ENCODE measurements at regions of chr6 and their contacts with region 1.

Region 1: GRCh38 chr6:35240840-35241801 is 18.4 kb upstream of the ZNF76 start:
- DNase-seq: peak; percentile 88
- H3K4me3 Mint-ChIP-seq: no peak overlapping the region
- H3K27ac Mint-ChIP-seq: no peak overlapping the region
- H3K4me1 Mint-ChIP-seq: no peaks in the 10 kb centered on the region
- H3K27me3 Mint-ChIP-seq: no peaks in the 10 kb centered on the region

Region 2: DNA sequence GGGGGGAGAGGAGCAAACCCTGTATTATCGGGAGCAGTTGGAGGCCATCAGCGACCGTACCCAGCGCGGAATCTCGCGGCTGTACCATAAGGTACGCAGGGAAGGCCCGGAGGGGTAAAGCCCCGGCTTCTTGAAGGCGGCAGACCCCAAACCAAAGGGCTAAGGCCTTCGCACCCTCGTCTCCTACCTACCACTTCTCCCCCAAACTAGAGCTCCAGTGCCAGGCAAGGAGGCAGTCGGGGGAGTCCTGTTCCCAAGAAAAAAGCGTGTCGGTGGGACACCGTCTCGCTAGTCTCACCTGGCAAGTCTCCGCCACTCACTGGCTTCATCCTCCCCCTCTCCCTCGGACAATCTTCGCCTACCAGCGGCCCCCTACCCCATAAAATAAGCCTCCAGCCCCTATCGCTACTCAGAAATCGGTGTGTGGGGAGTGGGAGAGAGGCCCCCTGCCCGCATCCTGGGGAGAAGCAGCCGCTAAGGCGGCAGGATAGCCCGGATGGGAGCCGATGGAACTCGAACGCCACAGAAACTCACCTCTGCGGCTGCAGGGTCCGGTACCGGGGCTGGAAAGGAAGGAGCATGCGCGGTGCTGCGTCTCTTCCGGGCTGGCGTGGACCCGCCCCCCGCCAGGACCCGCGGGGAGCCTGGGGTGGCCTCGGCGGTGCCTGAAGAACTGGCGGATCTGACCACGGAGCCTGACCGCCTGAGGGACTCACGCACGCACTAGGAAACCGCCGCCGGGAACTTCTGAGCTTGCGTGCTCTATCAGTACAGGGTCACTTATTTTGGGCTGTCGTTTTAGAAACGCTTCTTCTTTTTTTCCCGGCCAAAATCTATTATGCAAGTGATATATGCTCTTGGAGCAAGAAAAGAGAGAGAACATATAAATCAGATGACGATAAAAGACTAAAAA is 815.4 kb before region 1 on chr6 and contains the start of gene RPS10:
- CTCF ChIA-PET with region 1: no interaction called
- intact Hi-C with region 1: no loop called
- DNase-seq: peak; percentile 93
- H3K4me3 Mint-ChIP-seq: peak within 1 kb of the TSS; percentile 98
- H3K27ac Mint-ChIP-seq: peak within 1 kb of the TSS; percentile 98
- H3K4me1 Mint-ChIP-seq: peaks cover 38% of the 10 kb centered on the region
- H3K27me3 Mint-ChIP-seq: no peaks in the 10 kb centered on the region
- total RNA-seq, gene RPS10: 2,718 to 2,727 TPM

Region 3: GRCh38 chr6:34986845-34987246 is 254.3 kb before region 1 on chr6:
- CTCF ChIA-PET with region 1: interaction called, 24 read pairs
- intact Hi-C with region 1: loop called (anchors 1 kb)
- DNase-seq: peak; percentile 81
- H3K4me3 Mint-ChIP-seq: no peak overlapping the region
- H3K27ac Mint-ChIP-seq: no peak overlapping the region
- H3K4me1 Mint-ChIP-seq: no peaks in the 10 kb centered on the region
- H3K27me3 Mint-ChIP-seq: no peaks in the 10 kb centered on the region

Region 4: GRCh38 chr6:35146453-35146852 is 94.7 kb before region 1 on chr6:
- CTCF ChIA-PET with region 1: interaction called, 24 read pairs
- intact Hi-C with region 1: loop called (anchors 1 kb)
- DNase-seq: peak; percentile 68
- H3K4me3 Mint-ChIP-seq: no peak overlapping the region
- H3K27ac Mint-ChIP-seq: no peak overlapping the region
- H3K4me1 Mint-ChIP-seq: peaks cover 22% of the 10 kb centered on the region
- H3K27me3 Mint-ChIP-seq: peaks cover 6% of the 10 kb centered on the region

Region 5: GRCh38 chr6:35209081-35209480 is 32.0 kb before region 1 on chr6:
- CTCF ChIA-PET with region 1: interaction called, 14 read pairs
- intact Hi-C with region 1: no loop called
- DNase-seq: no peak
- H3K4me3 Mint-ChIP-seq: no peak overlapping the region
- H3K27ac Mint-ChIP-seq: no peak overlapping the region
- H3K4me1 Mint-ChIP-seq: peaks cover 5% of the 10 kb centered on the region
- H3K27me3 Mint-ChIP-seq: peaks cover 56% of the 10 kb centered on the region

Region 6: DNA sequence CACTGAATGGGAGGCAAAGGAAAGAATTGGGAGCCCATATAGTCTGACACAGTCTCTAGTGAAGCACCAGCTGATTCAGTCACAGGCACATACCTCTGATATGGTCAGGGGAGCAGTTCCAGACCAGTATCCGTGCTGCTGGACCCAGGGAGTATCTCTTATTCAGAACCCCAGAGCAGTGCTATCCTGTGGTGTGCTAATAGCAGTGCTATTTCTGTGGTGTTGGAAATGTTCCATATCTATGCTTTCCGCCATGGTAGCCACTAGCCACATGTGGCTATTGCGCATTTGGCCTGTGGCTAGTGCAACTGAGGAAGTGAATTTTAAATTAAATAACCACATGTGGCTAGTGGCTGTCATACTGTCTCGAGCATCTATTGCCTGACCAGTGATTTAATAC is 16.4 kb before region 1 on chr6:
- CTCF ChIA-PET with region 1: interaction called, 23 read pairs
- intact Hi-C with region 1: no loop called
- DNase-seq: no peak
- H3K4me3 Mint-ChIP-seq: no peak overlapping the region
- H3K27ac Mint-ChIP-seq: no peak overlapping the region
- H3K4me1 Mint-ChIP-seq: no peaks in the 10 kb centered on the region
- H3K27me3 Mint-ChIP-seq: peaks cover 3% of the 10 kb centered on the region

Region 7: GRCh38 chr6:35230950-35231349 is 10.2 kb before region 1 on chr6:
- CTCF ChIA-PET with region 1: interaction called, 23 read pairs
- intact Hi-C with region 1: no loop called
- DNase-seq: no peak
- H3K4me3 Mint-ChIP-seq: no peak overlapping the region
- H3K27ac Mint-ChIP-seq: no peak overlapping the region
- H3K4me1 Mint-ChIP-seq: no peaks in the 10 kb centered on the region
- H3K27me3 Mint-ChIP-seq: no peaks in the 10 kb centered on the region

Region 8: DNA sequence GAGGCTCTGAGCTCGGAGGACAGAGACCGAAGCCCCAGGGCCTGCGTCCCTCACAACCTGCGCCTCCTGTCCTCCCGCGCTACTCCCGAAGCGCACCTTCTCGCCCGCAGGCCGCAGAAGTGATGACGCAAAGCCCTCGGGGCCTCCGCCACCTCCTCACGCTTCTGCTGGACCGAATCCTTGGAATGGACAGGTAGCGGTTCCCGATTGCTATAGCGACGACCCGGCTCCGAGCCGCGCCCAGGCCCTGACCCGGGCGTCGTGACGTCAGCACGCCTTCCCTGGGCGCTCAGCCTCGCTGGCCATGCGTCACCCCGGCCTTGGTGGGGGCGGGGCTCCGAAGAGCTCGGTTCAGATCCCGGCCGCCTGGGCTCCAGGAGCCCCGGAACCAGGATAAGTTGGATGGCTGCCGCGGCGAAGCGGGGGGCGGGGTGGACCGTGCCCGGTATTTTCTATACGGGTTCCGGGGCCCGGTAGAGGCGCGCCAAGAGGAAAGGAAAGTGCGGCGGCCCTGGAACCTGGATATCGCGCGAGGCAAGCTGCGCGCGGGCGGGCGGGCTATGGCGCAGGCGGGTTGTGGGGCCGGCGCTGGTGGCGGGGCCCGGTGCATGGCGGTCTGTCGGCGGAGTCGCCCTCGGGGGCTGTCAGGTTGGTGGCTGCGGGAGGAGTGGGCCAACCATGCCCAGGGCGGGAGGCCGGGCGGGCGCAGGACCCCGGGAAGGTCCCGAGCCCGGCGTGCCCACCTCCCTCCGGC is 18.2 kb after region 1 on chr6 and contains the start of gene ZNF76:
- CTCF ChIA-PET with region 1: interaction called, 39 read pairs
- intact Hi-C with region 1: no loop called
- DNase-seq: peak; percentile 89
- H3K4me3 Mint-ChIP-seq: peak within 1 kb of the TSS; percentile 96
- H3K27ac Mint-ChIP-seq: peak within 1 kb of the TSS; percentile 86
- H3K4me1 Mint-ChIP-seq: peaks cover 45% of the 10 kb centered on the region
- H3K27me3 Mint-ChIP-seq: no peaks in the 10 kb centered on the region
- total RNA-seq, gene ZNF76: 32.4 to 38.2 TPM

Measured in activated naive CD4-positive, alpha-beta T cell treated with anti-CD3 and anti-CD28 coated beads for 36 hours (primary cell).